Endothelial cell of umbilical vein (primary cell): ENCODE measurements at regions of chr10 and their contacts with region 1.

Region 1: GRCh38 chr10:91409869-91410637 is at the start of gene HECTD2:
- DNase-seq: peak; percentile 72
- H3K4me3 ChIP-seq: peak within 1 kb of the TSS; percentile 54 to 86 (median 80)
- H3K27ac ChIP-seq: peak within 1 kb of the TSS; percentile 96
- H3K4me1 ChIP-seq: peaks cover 9% of the 10 kb centered on the region
- H3K27me3 ChIP-seq: no peaks in the 10 kb centered on the region
- CTCF ChIP-seq: peak; percentile 10 to 21
- POLR2A ChIP-seq: no peak
- total RNA-seq, gene HECTD2: 7.7 and 10.7 TPM in 2 replicates

Region 2: GRCh38 chr10:90885176-90885575 is 524.9 kb before region 1 on chr10:
- CTCF ChIA-PET with region 1: no interaction called
- POLR2A ChIA-PET with region 1: no interaction called
- dilution Hi-C with region 1: no loop called
- intact Hi-C with region 1: loop called (anchors 1 kb)
- DNase-seq: no peak
- H3K4me3 ChIP-seq: no peak overlapping the region
- H3K27ac ChIP-seq: no peak overlapping the region
- H3K4me1 ChIP-seq: no peaks in the 10 kb centered on the region
- H3K27me3 ChIP-seq: no peaks in the 10 kb centered on the region
- CTCF ChIP-seq: no peak
- POLR2A ChIP-seq: no peak

Region 3: GRCh38 chr10:91340613-91341362 is 69.3 kb before region 1 on chr10:
- CTCF ChIA-PET with region 1: no interaction called
- POLR2A ChIA-PET with region 1: no interaction called
- dilution Hi-C with region 1: no loop called
- intact Hi-C with region 1: loop called (anchors 1 kb)
- DNase-seq: peak; percentile 94
- H3K4me3 ChIP-seq: peak overlapping the region in 1 of 3 experiments; percentile 10
- H3K27ac ChIP-seq: peak overlapping the region; percentile 93
- H3K4me1 ChIP-seq: peaks cover 31% of the 10 kb centered on the region
- H3K27me3 ChIP-seq: no peaks in the 10 kb centered on the region
- CTCF ChIP-seq: no peak
- POLR2A ChIP-seq: no peak

Region 4: GRCh38 chr10:91434041-91434440 is 24.0 kb after region 1 on chr10:
- CTCF ChIA-PET with region 1: no interaction called
- POLR2A ChIA-PET with region 1: no interaction called
- dilution Hi-C with region 1: no loop called
- intact Hi-C with region 1: loop called (anchors 2 kb)
- DNase-seq: peak; percentile 63
- H3K4me3 ChIP-seq: no peak overlapping the region
- H3K27ac ChIP-seq: no peak overlapping the region
- H3K4me1 ChIP-seq: peaks cover 16% of the 10 kb centered on the region
- H3K27me3 ChIP-seq: no peaks in the 10 kb centered on the region
- CTCF ChIP-seq: no peak
- POLR2A ChIP-seq: no peak

Region 5: DNA sequence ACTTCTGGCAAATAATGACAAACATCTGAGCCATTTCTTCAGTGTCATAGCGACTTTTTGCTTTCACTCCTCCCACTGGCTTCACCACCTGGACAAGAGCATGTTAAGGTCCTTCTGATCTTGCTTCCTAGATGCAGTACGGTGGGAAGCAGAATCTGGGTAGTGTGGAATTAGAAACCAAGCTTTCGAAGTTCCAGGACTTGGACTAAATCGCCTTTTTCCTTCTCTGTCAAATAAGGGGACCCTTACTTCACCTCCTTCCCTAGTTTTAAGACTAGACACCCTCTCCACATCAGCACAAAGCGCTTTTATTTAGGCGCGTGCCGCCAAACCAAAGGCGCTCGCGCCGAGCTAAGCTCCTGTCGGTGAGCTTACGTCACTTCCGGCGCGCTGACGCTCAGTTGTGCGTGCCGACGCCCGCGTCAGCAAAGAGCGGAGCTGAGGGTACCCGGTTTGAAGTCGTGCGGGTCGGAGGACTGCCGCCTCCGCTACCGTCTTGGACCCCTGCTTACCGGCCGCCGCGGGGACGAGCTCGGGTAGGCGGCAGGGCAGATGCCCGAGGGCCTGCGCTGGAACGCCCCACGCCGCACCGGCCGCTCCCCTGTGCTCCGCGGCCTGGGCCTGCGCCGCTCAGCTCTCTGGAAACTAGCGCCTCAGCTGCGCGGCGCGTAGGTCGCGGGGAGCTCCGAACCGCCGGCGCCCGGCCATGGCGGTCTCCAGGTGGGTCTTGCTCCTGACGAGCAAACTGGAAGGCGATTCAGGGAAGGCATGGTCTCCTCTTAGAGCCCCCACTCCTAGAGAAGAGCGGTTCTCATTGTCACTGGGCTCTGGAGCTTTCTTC is 513.5 kb after region 1 on chr10 and contains the start of gene BTAF1:
- CTCF ChIA-PET with region 1: no interaction called
- POLR2A ChIA-PET with region 1: no interaction called
- dilution Hi-C with region 1: no loop called
- intact Hi-C with region 1: loop called (anchors 5 kb)
- DNase-seq: peak; percentile 95
- H3K4me3 ChIP-seq: peak within 1 kb of the TSS; percentile 87 to 99 (median 87)
- H3K27ac ChIP-seq: peak within 1 kb of the TSS; percentile 66
- H3K4me1 ChIP-seq: peaks cover 12% of the 10 kb centered on the region
- H3K27me3 ChIP-seq: no peaks in the 10 kb centered on the region
- CTCF ChIP-seq: no peak
- POLR2A ChIP-seq: peak; percentile 96
- total RNA-seq, gene BTAF1: 21.3 and 23.1 TPM in 2 replicates